ENCODE measurements at regions of chr20 and their contacts with region 1.

Region 1: GRCh38 chr20:47358672-47359529 is 2.4 kb upstream of the ZMYND8 start:
- DNase-seq: peak; percentile 94
- H3K4me3 ChIP-seq: peak overlapping the region in 1 of 4 donors; percentile 18
- H3K27ac ChIP-seq: peak overlapping the region; percentile 99 to 100 (median 99)
- H3K4me1 ChIP-seq: peaks cover 0 to 89% (median 78%) of the 10 kb centered on the region in 4 donors
- H3K27me3 ChIP-seq: no peaks in the 10 kb centered on the region
- CTCF ChIP-seq: peak in 1 of 4 experiments; percentile 8
- EP300 ChIP-seq: peak; percentile 29 to 86 (median 60)
- POLR2A ChIP-seq: peak; percentile 26 to 43

Region 2: GRCh38 chr20:47317127-47317895 is 41.6 kb before region 1 on chr20:
- intact Hi-C with region 1: loop called (anchors 1 kb)
- DNase-seq: peak; percentile 95
- H3K4me3 ChIP-seq: peak overlapping the region in 2 of 4 donors; percentile 26 to 30
- H3K27ac ChIP-seq: peak overlapping the region; percentile 94 to 97 (median 96)
- H3K4me1 ChIP-seq: peaks cover 0 to 93% (median 73%) of the 10 kb centered on the region in 4 donors
- H3K27me3 ChIP-seq: no peaks in the 10 kb centered on the region
- CTCF ChIP-seq: no peak
- EP300 ChIP-seq: peak; percentile 92 to 99 (median 96)
- POLR2A ChIP-seq: peak; percentile 36 to 47

Region 3: DNA sequence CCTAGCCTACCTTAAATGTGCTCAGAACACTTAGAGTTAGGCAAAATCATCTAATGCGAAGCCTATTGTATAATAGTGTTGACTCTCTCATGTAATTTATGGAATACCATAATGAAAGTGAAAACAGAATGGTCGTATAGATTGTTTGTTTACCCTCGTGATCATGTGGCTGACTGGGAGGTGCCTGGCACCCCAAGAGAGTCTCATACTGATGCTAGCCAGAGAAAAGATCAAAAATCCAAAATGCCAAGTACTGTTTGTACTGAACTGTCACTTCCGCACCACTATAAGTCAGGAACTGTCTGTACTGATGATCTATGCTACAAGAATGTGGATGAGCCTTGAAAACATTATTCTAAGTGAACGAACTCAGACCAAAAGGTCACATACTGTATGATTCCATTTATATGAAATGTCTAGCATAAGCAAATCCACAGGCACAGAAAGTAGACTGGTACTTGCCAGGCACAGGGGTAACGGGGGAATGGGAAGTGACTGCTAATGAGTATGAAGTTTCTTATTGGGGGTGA is 24.8 kb before region 1 on chr20:
- intact Hi-C with region 1: loop called (anchors 2 kb)
- DNase-seq: no peak
- H3K4me3 ChIP-seq: peak overlapping the region in 1 of 4 donors; percentile 2
- H3K27ac ChIP-seq: peak overlapping the region; percentile 91 to 97 (median 93)
- H3K4me1 ChIP-seq: peaks cover 0 to 100% (median 98%) of the 10 kb centered on the region in 4 donors
- H3K27me3 ChIP-seq: no peaks in the 10 kb centered on the region
- CTCF ChIP-seq: no peak
- EP300 ChIP-seq: peak; percentile 97 to 100 (median 99)
- POLR2A ChIP-seq: no peak